PC-3 (cell line): ENCODE measurements at regions of chr3 and their contacts with region 1.

Region 1: GRCh38 chr3:110814170-110815007 is 257.2 kb upstream of the NECTIN3 start:
- DNase-seq: peak; percentile 92
- ATAC-seq: peak; percentile 93
- H3K4me3 ChIP-seq: peak overlapping the region; percentile 4; the same call in 1 of the 2 replicates
- H3K27ac ChIP-seq: peak overlapping the region; percentile 94
- H3K4me1 ChIP-seq: peaks cover 53% of the 10 kb centered on the region
- H3K27me3 ChIP-seq: no peaks in the 10 kb centered on the region
- CTCF ChIP-seq: no peak

Region 2: DNA sequence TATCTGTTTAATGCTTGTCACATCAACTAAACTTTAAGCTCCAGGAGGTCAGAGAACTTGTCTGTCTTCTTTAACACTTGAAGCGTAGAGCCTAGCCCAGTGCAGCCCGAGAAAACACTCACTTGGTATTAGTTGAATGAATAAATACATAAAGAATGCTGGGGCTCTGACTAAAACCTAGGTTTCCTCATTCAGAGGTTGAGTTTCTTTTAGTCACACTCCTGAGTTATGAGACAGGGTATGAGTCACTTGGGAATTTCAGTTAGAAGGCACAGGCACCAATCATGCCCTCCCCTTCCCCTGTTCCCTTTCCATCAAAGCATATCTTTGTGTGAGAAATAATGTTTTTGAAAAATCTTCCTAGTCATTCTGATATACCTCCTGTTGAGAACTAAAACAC is 887.2 kb before region 1 on chr3:
- CTCF ChIA-PET with region 1: no interaction called
- POLR2A ChIA-PET with region 1: no interaction called
- intact Hi-C with region 1: loop called (anchors 10 kb)
- DNase-seq: peak; percentile 97
- ATAC-seq: peak; percentile 97
- H3K4me3 ChIP-seq: no peak overlapping the region
- H3K27ac ChIP-seq: peak overlapping the region; percentile 90
- H3K4me1 ChIP-seq: peaks cover 32% of the 10 kb centered on the region
- H3K27me3 ChIP-seq: no peaks in the 10 kb centered on the region
- CTCF ChIP-seq: no peak

Region 3: DNA sequence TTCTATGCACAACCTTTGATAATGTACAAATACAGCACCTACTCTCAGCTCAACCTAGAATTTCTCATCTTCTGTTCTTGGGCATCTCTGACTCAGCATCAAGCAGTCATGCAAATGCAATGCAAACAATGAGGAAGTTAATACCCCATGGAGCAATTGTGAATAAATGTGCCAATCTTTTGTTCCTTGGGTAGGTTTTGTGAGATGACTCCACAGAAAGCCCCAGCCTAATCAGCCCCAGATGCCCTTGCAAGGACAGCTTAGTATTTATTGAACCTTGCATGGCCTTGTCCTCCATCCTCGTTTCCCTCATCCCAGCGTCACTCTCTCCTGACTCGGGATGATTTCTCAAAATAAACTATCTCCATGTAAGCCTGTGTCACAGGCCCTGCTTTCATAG is 237.4 kb before region 1 on chr3:
- CTCF ChIA-PET with region 1: no interaction called
- POLR2A ChIA-PET with region 1: no interaction called
- intact Hi-C with region 1: loop called (anchors 2 kb)
- DNase-seq: peak; percentile 95
- ATAC-seq: peak; percentile 94
- H3K4me3 ChIP-seq: no peak overlapping the region
- H3K27ac ChIP-seq: peak overlapping the region; percentile 52
- H3K4me1 ChIP-seq: peaks cover 29% of the 10 kb centered on the region
- H3K27me3 ChIP-seq: no peaks in the 10 kb centered on the region
- CTCF ChIP-seq: no peak

Region 4: DNA sequence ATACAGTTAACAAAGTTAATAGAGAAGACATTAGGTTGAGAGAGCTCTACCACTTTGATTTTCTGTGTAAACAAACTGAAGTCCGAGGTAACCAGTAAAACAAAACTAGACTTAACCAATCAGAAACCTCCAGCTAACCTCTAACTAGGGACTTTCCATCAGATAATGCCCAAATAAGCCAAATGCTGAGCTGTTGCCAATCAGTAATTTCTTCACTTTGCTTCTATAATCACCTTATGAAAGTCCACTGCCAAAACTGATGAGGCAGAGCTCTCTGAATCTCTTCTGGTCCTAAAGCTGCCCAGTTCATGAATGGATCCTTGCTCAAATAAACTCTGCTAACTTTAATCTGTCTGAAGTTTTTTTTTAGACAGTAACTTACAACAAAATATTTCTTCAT is 190.8 kb before region 1 on chr3:
- CTCF ChIA-PET with region 1: no interaction called
- POLR2A ChIA-PET with region 1: no interaction called
- intact Hi-C with region 1: no loop called
- DNase-seq: peak; percentile 7
- ATAC-seq: no peak
- H3K4me3 ChIP-seq: no peak overlapping the region
- H3K27ac ChIP-seq: no peak overlapping the region
- H3K4me1 ChIP-seq: no peaks in the 10 kb centered on the region
- H3K27me3 ChIP-seq: no peaks in the 10 kb centered on the region
- CTCF ChIP-seq: no peak

Region 5: DNA sequence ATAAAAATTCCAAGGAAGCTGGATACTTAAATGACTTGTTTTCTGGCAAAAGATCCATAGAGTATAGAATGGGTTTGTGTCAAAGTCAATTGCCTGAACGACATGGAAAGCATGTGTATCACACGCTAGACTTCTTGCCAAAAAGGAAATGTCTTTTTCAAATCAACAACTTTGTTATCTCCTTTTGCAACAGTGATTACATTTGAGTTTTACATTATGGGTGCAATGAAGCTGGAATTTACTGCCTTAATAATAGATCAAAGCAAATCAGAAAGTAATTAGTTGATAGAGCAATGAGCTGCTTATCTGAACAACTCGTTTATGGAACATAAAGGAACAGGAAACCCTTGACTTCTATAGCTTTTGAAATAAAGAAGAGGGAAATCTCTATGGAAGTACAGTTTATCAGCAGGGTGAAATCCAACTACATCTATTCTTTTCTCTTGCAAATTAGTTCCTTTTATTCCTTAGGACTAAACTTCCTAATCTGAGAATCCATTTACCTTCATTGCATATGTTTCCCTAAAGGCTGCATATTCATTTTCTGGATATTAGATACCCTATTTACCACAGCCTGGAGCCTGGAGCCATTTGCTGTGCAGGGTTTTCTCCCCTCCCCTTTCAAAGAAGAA is 157.9 kb before region 1 on chr3:
- CTCF ChIA-PET with region 1: no interaction called
- POLR2A ChIA-PET with region 1: no interaction called
- intact Hi-C with region 1: loop called (anchors 5 kb)
- DNase-seq: no peak
- ATAC-seq: no peak
- H3K4me3 ChIP-seq: no peak overlapping the region
- H3K27ac ChIP-seq: no peak overlapping the region
- H3K4me1 ChIP-seq: no peaks in the 10 kb centered on the region
- H3K27me3 ChIP-seq: no peaks in the 10 kb centered on the region
- CTCF ChIP-seq: no peak

Region 6: DNA sequence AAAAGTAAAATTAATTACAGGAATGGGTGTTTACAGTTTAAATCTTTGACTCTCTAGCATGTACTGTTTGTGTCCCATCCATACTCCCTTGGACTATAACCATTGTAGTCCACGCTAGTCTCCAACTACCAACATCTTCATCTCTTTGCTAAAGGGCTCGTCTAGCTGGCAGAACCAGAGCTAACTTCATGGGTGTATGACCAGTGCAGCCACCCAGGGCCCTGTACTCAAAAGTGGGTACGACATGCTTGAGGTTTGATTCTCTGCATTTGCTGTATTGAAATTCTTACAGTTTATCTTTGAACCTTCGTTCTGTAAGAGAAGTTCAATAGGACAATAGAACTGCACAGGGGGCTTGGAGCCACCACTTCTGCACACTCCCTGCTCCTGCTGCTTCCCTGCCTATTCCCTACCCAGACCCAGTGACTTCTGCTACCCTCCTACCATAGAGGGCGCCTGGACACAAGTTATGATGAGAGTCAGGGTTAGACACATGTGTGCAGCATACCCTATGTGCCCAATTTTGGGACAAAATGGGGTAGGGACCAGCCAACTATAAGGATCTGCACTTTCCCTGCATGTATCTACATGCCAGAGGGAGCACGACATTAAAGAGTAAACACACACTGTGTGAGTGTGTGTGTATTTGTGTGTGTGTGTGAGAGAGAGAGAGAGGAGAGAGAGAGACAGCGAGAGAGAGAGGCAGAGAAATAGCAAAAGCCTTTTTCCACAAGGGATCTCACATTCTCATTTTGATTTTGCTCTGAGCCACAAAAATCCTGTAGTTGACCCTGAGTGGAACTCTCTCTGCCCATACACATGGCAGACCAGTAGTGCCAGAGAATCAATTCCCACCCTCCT is 198.2 kb after region 1 on chr3:
- CTCF ChIA-PET with region 1: no interaction called
- POLR2A ChIA-PET with region 1: no interaction called
- intact Hi-C with region 1: loop called (anchors 10 kb)
- DNase-seq: peak; percentile 60
- ATAC-seq: peak; percentile 98
- H3K4me3 ChIP-seq: no peak overlapping the region
- H3K27ac ChIP-seq: no peak overlapping the region
- H3K4me1 ChIP-seq: no peaks in the 10 kb centered on the region
- H3K27me3 ChIP-seq: no peaks in the 10 kb centered on the region
- CTCF ChIP-seq: peak; percentile 66